ENCODE measurements at regions of chr7 and their contacts with region 1.

Region 1: GRCh38 chr7:95840953-95841950 is 68.9 kb downstream of the DYNC1I1 start:
- H3K4me3 ChIP-seq: no peak overlapping the region
- H3K27ac ChIP-seq: no peak overlapping the region
- H3K4me1 ChIP-seq: no peaks in the 10 kb centered on the region
- CTCF ChIP-seq: no peak

Region 2: DNA sequence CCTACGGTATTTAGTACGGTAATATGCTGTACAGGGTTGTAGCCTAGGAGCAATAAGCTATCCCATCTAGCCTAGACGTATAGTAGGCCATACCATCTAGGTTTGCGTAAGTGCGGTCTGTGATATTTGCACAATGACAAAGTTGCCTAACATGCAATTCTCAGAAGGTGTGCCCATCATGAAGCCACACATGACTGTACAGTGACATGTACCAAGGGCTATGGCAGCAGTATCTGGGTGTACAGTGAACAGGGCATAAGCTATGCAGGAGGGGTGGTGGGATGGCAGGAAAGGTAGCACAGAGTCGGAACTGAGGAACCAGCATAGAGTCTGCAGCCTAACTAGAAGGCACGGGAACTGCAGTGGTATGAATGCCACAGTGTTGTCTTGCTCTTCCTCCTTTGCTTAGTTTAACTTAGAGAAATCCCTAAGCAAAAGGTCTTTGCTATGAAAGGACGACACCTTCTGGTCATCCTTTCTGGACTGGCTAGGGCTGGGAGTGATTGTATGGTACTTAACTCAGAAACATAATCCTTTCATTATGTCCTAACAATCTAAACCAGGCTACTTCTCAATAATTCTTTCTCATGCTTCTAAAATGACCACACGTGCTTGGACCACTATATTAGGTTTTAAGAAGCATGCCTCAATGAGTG is 24.6 kb after region 1 on chr7:
- CTCF ChIA-PET with region 1: interaction called, 15 read pairs
- POLR2A ChIA-PET with region 1: no interaction called
- H3K4me3 ChIP-seq: no peak overlapping the region
- H3K27ac ChIP-seq: no peak overlapping the region
- H3K4me1 ChIP-seq: no peaks in the 10 kb centered on the region
- CTCF ChIP-seq: peak; percentile 45; the same call in 1 of the 2 replicates